Gastrocnemius medialis (tissue), 4 donors: ENCODE measurements at regions of chr1 and their contacts with region 1.

Region 1: GRCh38 chr1:235442788-235443429 is 61.3 kb downstream of the B3GALNT2 start:
- DNase-seq: no peak
- ATAC-seq: peak; percentile 51 to 68
- H3K4me3 ChIP-seq: no peak overlapping the region
- H3K27ac ChIP-seq: peak overlapping the region; percentile 64 to 72 (median 68)
- H3K4me1 ChIP-seq: peaks cover 6 to 10% of the 10 kb centered on the region in 2 donors
- H3K27me3 ChIP-seq: no peaks in the 10 kb centered on the region
- CTCF ChIP-seq: no peak
- POLR2A ChIP-seq: no peak

Region 2: GRCh38 chr1:234458352-234459017 is 984.4 kb before region 1 on chr1:
- in situ Hi-C with region 1: loop called in 1 of 4 experiments (anchors 25 kb)
- intact Hi-C with region 1: no loop called
- DNase-seq: no peak
- ATAC-seq: peak; percentile 36 to 44
- H3K4me3 ChIP-seq: no peak overlapping the region
- H3K27ac ChIP-seq: peak overlapping the region; percentile 13 to 62 (median 38)
- H3K4me1 ChIP-seq: peaks cover 6 to 12% of the 10 kb centered on the region in 2 donors
- H3K27me3 ChIP-seq: no peaks in the 10 kb centered on the region
- CTCF ChIP-seq: no peak
- POLR2A ChIP-seq: no peak